Posterior vena cava (tissue), 2 donors: ENCODE measurements at regions of chr3 and their contacts with region 1.

Region 1: GRCh38 chr3:80496452-80496851 is 728.7 kb upstream of the ROBO1 start:
- DNase-seq: no peak

Region 2: DNA sequence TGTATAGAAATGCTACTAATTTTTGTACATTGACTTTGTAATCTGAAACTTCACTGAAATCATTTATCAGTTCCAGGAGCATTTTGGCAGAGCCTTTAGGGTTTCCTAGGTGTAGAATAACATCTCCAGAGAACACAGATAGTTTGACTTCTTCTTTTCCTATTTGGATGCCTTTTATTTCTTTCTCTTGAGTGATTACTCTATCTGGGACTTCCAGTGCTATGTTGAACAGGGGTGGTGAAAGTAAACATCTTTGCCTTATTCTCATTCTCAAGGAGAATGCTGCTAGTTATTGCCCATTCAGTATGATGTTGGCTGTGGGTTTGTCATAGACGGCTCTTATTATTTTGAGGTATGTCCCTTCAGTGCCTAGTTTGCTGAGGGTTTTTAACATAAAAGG is 30.7 kb before region 1 on chr3:
- intact Hi-C with region 1: no loop called
- DNase-seq: no peak

Region 3: GRCh38 chr3:82462977-82463376 is 1966.5 kb after region 1 on chr3:
- intact Hi-C with region 1: loop called in 1 of 2 experiments (anchors 10 kb)
- DNase-seq: no peak